Heart right ventricle (tissue), 16 donors: ENCODE measurements at regions of chr2 and their contacts with region 1.

Region 1: GRCh38 chr2:81412681-81413080 is 1108.1 kb upstream of the LRRTM1 start:
- DNase-seq: no peak
- ATAC-seq: no peak
- H3K4me3 ChIP-seq: no peak overlapping the region
- H3K27ac ChIP-seq: no peak overlapping the region
- H3K4me1 ChIP-seq: no peaks in the 10 kb centered on the region
- H3K27me3 ChIP-seq: no peaks in the 10 kb centered on the region
- CTCF ChIP-seq: no peak

Region 2: DNA sequence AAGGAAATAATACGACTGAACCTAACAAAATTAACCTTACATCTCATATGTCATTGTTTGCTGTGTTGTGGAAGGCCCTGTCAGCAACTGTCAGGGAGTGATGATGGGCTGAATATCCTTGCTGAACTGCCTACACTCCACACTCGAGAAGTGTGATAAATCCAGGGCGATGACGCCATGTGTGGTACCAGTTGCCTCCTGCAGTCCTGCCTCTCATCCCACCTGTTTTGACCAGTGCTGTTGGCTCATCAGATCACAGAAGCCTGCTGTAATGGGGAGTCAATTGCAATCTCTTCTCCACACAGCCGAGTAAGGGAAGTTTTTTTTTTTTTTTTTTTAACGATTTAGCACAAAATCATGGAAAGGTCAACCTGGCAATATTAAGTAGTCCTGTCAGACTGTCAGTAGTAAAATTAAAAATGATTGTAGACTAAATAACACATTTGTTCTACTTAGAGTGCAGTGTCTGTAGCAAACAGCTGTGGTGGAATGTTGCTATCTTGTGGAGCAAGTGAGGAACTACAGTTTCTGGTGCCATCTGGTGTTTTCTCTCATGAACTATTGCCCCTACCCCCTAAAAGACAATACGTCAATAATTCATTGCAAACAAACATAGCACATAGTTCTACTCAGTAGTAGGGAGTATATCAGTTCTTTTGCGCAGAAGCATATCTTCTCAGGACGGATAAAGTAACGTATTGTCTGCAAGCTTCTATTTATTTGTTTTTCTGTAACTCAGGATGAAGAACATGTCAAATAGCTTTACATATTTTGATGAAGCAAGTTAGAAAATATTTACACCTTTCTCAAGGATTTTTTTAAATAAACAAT is 1552.2 kb before region 1 on chr2:
- intact Hi-C with region 1: loop called in 1 of 10 experiments (anchors 10 kb)
- DNase-seq: no peak
- ATAC-seq: no peak
- H3K4me3 ChIP-seq: no peak overlapping the region
- H3K27ac ChIP-seq: no peak overlapping the region
- H3K4me1 ChIP-seq: no peaks in the 10 kb centered on the region
- H3K27me3 ChIP-seq: peaks cover 0 to 22% (median 0%) of the 10 kb centered on the region in 7 donors
- CTCF ChIP-seq: peak in 6 of 9 donors; percentile 24 to 39 (median 32)

Region 3: GRCh38 chr2:81462420-81462819 is 49.7 kb after region 1 on chr2:
- intact Hi-C with region 1: no loop called
- DNase-seq: no peak
- ATAC-seq: no peak
- H3K4me3 ChIP-seq: no peak overlapping the region
- H3K27ac ChIP-seq: no peak overlapping the region
- H3K4me1 ChIP-seq: no peaks in the 10 kb centered on the region
- H3K27me3 ChIP-seq: no peaks in the 10 kb centered on the region
- CTCF ChIP-seq: no peak

Region 4: GRCh38 chr2:81551040-81551634 is 138.5 kb after region 1 on chr2:
- intact Hi-C with region 1: no loop called
- DNase-seq: no peak
- ATAC-seq: no peak
- H3K4me3 ChIP-seq: no peak overlapping the region
- H3K27ac ChIP-seq: no peak overlapping the region
- H3K4me1 ChIP-seq: no peaks in the 10 kb centered on the region
- H3K27me3 ChIP-seq: no peaks in the 10 kb centered on the region
- CTCF ChIP-seq: no peak